Aorta (tissue), 5 donors: ENCODE measurements at regions of chr17 and their contacts with region 1.

Region 1: DNA sequence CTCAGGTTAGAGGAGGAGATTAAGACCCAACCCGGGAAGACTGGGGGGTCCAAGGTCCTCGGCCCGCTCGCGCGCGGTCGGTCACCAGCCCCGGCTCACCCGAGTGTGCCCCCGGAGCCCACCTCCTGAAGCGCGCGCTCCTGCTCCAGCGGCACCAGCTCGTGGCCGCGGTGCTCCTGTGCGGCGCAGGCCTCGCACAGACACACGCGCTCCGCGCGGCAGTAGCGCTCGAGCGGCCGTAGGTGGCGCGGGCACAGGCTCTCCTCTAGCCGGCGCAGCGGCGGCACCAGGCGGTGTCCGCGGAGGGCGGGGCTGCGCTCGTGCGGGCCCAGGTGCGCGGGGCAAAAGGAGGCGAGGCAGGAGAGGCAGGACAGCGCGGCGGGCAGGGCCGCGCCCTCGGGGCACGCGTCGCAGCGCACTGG is 618 bp downstream of the TRIM47 start:
- DNase-seq: peak; percentile 84 to 92
- ATAC-seq: peak; percentile 64
- H3K4me3 ChIP-seq: peak overlapping the region; percentile 4 to 88
- H3K27ac ChIP-seq: peak overlapping the region; percentile 59 to 79
- H3K4me1 ChIP-seq: peaks cover 0 to 3% of the 10 kb centered on the region in 2 donors
- H3K27me3 ChIP-seq: no peaks in the 10 kb centered on the region

Region 2: GRCh38 chr17:75779231-75779986 is 98.4 kb before region 1 on chr17:
- intact Hi-C with region 1: loop called in 1 of 2 experiments (anchors 5 kb)
- DNase-seq: peak; percentile 98 to 99
- ATAC-seq: peak; percentile 91
- H3K4me3 ChIP-seq: peak overlapping the region; percentile 84 to 93
- H3K27ac ChIP-seq: peak overlapping the region; percentile 89 to 97
- H3K4me1 ChIP-seq: no peaks in the 10 kb centered on the region
- H3K27me3 ChIP-seq: peaks cover 0 to 2% of the 10 kb centered on the region in 2 donors